Activated T-helper 1 cell treated with anti-CD3 and anti-CD28 coated beads, Interleukin-12 subunit alpha, Interleukin-12 subunit beta, Interleukin-2, Interleukin-4 antibody, amounts not matched to agents 30 ng/mL and 10 ng/mL and 1 ng/mL, durations not matched to agents 14 hours and 24 hours and 36 hours (primary cell): ENCODE measurements at regions of chr22 and their contacts with region 1.

Region 1: GRCh38 chr22:22865311-22866072 is 22.1 kb upstream of the IGLL5 start:
- DNase-seq: peak; percentile 27
- H3K4me3 Mint-ChIP-seq: no peak overlapping the region
- H3K27ac Mint-ChIP-seq: peak overlapping the region; percentile 55
- H3K4me1 Mint-ChIP-seq: peaks cover 35% of the 10 kb centered on the region
- H3K27me3 Mint-ChIP-seq: peaks cover 55% of the 10 kb centered on the region

Region 2: GRCh38 chr22:22820626-22821025 is 44.9 kb before region 1 on chr22:
- intact Hi-C with region 1: loop called (anchors 2 kb)
- DNase-seq: peak; percentile 50
- H3K4me3 Mint-ChIP-seq: peak overlapping the region; percentile 71
- H3K27ac Mint-ChIP-seq: peak overlapping the region; percentile 82
- H3K4me1 Mint-ChIP-seq: peaks cover 90% of the 10 kb centered on the region
- H3K27me3 Mint-ChIP-seq: peaks cover 4% of the 10 kb centered on the region

Region 3: GRCh38 chr22:22834204-22834603 is 31.3 kb before region 1 on chr22:
- intact Hi-C with region 1: no loop called
- DNase-seq: no peak
- H3K4me3 Mint-ChIP-seq: no peak overlapping the region
- H3K27ac Mint-ChIP-seq: no peak overlapping the region
- H3K4me1 Mint-ChIP-seq: peaks cover 8% of the 10 kb centered on the region
- H3K27me3 Mint-ChIP-seq: peaks cover 55% of the 10 kb centered on the region

Region 4: GRCh38 chr22:22928666-22929380 is 63.3 kb after region 1 on chr22:
- intact Hi-C with region 1: loop called (anchors 1 kb)
- DNase-seq: peak; percentile 75
- H3K4me3 Mint-ChIP-seq: peak overlapping the region; percentile 51
- H3K27ac Mint-ChIP-seq: peak overlapping the region; percentile 78
- H3K4me1 Mint-ChIP-seq: peaks cover 35% of the 10 kb centered on the region
- H3K27me3 Mint-ChIP-seq: peaks cover 10% of the 10 kb centered on the region

Region 5: DNA sequence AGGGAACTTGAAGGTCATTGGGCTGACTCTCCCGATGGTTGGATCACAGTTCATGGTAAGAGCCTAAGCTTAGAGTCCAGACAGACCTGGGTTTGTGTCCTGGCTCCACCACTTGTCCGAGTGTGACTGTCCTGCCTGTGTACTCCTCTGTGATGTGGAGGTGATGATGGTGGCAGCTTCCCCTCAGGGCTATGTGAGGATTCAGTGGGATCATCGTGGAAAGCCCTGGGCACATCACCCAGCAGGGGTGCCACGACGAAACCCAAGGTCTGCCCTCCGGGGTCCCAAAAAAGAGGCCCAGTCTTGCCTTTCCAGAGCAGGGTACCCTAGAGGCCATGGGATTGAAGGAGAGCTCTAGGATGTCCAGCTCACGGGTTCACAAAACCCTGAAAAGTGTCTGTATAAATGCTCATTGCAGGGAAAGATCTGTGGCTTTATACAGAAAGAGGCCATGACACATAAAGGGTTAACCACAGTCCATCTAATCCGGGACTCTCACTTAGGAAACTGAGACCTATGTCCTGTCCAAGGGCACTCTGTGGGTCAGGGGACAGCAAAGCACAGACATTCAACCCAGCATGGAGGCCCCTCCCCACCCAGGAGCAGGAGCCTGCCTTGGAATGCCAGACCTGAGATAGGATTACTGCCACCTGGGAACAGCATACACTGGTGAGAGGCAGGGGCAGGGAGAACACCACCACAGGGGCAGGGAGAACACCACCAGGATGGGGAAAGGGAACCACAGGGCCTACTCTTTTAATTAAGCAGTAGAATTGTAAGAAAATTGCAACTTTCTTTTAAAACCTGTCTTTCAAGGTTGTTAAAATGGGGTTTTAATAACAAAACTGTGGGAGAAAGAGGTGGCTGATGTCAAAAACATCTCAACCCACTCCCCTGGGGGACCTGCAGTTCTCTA is 73.4 kb after region 1 on chr22:
- intact Hi-C with region 1: no loop called
- DNase-seq: no peak
- H3K4me3 Mint-ChIP-seq: no peak overlapping the region
- H3K27ac Mint-ChIP-seq: no peak overlapping the region
- H3K4me1 Mint-ChIP-seq: peaks cover 27% of the 10 kb centered on the region
- H3K27me3 Mint-ChIP-seq: peaks cover 15% of the 10 kb centered on the region